BJ (cell line): ENCODE measurements at regions of chr6 and their contacts with region 1.

Region 1: DNA sequence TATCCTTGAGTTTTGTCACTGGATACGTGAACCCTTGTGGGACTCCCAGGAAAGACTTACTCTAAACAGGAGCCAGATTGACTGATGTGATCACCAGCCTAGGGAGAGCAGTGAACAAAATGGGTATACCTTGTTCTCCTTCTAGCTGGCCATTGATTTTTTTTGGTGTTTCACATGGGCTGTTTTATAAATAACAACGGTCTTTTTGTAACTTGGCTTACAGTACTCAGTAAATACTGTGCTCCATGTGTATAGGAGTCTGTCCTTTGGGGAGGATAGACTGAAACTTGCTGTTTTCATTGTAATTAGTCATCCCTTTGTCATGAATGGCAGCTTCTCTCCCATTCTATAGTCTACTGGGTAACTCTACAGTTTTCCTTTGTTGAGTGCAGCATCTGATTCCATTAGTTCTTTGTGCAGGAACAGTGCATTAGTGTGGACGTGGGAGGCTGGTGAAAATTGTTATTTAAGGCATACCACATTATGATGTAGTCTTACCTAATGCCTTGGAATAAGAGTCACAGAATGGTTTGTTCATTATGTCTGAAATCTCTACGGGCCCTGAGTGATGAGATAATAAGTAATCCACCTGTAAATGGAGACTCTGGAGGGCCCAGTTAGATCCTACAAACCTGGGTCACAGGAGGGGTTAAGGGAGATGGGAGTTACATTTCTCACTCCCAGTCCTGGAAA is 89.5 kb downstream of the TIAM2 start:
- DNase-seq: no peak
- H3K4me3 ChIP-seq: no peak overlapping the region
- H3K27me3 ChIP-seq: no peaks in the 10 kb centered on the region
- CTCF ChIP-seq: no peak

Region 2: GRCh38 chr6:153625089-153625488 is 1459.5 kb before region 1 on chr6:
- CTCF ChIA-PET with region 1: no interaction called
- POLR2A ChIA-PET with region 1: no interaction called
- DNase-seq: peak; percentile 21
- H3K4me3 ChIP-seq: no peak overlapping the region
- H3K27me3 ChIP-seq: no peaks in the 10 kb centered on the region
- CTCF ChIP-seq: no peak

Region 3: GRCh38 chr6:155069543-155069942 is 15.0 kb before region 1 on chr6:
- CTCF ChIA-PET with region 1: interaction called, 4 read pairs
- POLR2A ChIA-PET with region 1: interaction called, 17 read pairs
- DNase-seq: no peak
- H3K4me3 ChIP-seq: no peak overlapping the region
- H3K27me3 ChIP-seq: no peaks in the 10 kb centered on the region
- CTCF ChIP-seq: no peak